HEK293 (cell line): ENCODE measurements at regions of chr5 and their contacts with region 1.

Region 1: DNA sequence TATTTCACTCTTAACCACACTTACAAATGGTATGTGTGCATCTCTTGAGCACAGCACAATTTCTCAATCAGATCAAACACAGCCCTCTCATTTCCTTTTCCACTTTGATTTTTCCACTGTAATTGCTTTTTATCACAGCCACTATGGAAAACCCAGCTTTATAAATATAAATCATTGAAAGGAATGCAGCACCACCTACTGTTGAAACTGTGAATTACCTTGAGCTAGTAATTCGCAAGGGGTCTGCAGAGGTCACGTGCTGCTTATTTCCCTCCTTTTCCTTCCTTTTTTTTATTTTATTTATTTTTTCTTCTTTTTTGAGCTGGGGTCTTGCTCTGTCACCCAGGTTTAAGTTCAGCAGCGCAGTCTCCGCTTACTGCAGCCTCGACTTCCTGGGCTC is 76.9 kb downstream of the CDH6 start:
- H3K4me3 ChIP-seq: no peak overlapping the region
- H3K27ac ChIP-seq: no peak overlapping the region
- H3K4me1 ChIP-seq: no peaks in the 10 kb centered on the region
- CTCF ChIP-seq: peak; percentile 31; the same call in 1 of the 2 replicates

Region 2: GRCh38 chr5:30040488-30041118 is 1229.8 kb before region 1 on chr5:
- CTCF ChIA-PET with region 1: interaction called, 14 read pairs
- POLR2A ChIA-PET with region 1: no interaction called
- H3K4me3 ChIP-seq: no peak overlapping the region
- H3K27ac ChIP-seq: no peak overlapping the region
- H3K4me1 ChIP-seq: no peaks in the 10 kb centered on the region
- CTCF ChIP-seq: peak; percentile 59; the same call in 1 of the 2 replicates

Region 3: GRCh38 chr5:30838936-30839496 is 431.4 kb before region 1 on chr5:
- CTCF ChIA-PET with region 1: no interaction called
- POLR2A ChIA-PET with region 1: no interaction called
- H3K4me3 ChIP-seq: no peak overlapping the region
- H3K27ac ChIP-seq: no peak overlapping the region
- H3K4me1 ChIP-seq: no peaks in the 10 kb centered on the region
- CTCF ChIP-seq: no peak

Region 4: DNA sequence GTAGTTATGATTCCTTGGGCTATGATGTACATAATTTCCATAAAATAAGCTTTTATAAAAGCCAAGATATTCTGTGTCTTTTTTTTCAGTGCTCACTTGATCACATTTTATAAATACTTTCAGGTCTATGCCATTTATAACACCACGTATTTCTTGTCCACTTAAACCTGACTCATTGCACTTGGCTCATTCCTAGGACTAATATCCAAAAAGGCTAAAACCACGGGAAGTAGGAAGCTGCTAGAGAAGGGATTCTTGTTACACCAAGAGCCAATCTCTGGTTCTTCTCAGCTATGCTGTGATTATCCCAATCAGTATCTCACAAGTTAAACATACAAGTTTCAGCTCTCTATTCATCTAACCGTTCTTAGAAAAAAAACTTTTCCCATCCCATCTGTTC is 157.3 kb before region 1 on chr5:
- CTCF ChIA-PET with region 1: no interaction called
- POLR2A ChIA-PET with region 1: no interaction called
- H3K4me3 ChIP-seq: no peak overlapping the region
- H3K27ac ChIP-seq: no peak overlapping the region
- H3K4me1 ChIP-seq: no peaks in the 10 kb centered on the region
- CTCF ChIP-seq: no peak

Region 5: GRCh38 chr5:31255041-31255440 is 15.4 kb before region 1 on chr5:
- CTCF ChIA-PET with region 1: interaction called, 11 read pairs
- POLR2A ChIA-PET with region 1: no interaction called
- H3K4me3 ChIP-seq: no peak overlapping the region
- H3K27ac ChIP-seq: no peak overlapping the region
- H3K4me1 ChIP-seq: no peaks in the 10 kb centered on the region
- CTCF ChIP-seq: no peak